Activated naive CD8-positive, alpha-beta T cell treated with anti-CD3 and anti-CD28 coated beads, Interleukin-2, amount 10 ng/mL, durations not matched to agents 7 days and 5 days (primary cell): ENCODE measurements at regions of chr16 and their contacts with region 1.

Region 1: GRCh38 chr16:31179747-31180459 is at the start of gene FUS:
- DNase-seq: peak; percentile 96
- ATAC-seq: peak; percentile 60
- H3K4me3 Mint-ChIP-seq: peak within 1 kb of the TSS; percentile 99
- H3K27ac Mint-ChIP-seq: peak within 1 kb of the TSS; percentile 97
- H3K4me1 Mint-ChIP-seq: peaks cover 44% of the 10 kb centered on the region
- H3K27me3 Mint-ChIP-seq: no peaks in the 10 kb centered on the region
- total RNA-seq, gene FUS: 540 to 618 TPM

Region 2: GRCh38 chr16:30977502-30977901 is 202.4 kb before region 1 on chr16:
- POLR2A ChIA-PET with region 1: no interaction called
- DNase-seq: peak; percentile 48
- ATAC-seq: no peak
- H3K4me3 Mint-ChIP-seq: no peak overlapping the region
- H3K27ac Mint-ChIP-seq: no peak overlapping the region
- H3K4me1 Mint-ChIP-seq: peaks cover 3% of the 10 kb centered on the region
- H3K27me3 Mint-ChIP-seq: no peaks in the 10 kb centered on the region

Region 3: GRCh38 chr16:30997000-30997886 is 182.7 kb before region 1 on chr16:
- POLR2A ChIA-PET with region 1: interaction called, 12 read pairs
- DNase-seq: peak; percentile 86
- ATAC-seq: peak; percentile 97
- H3K4me3 Mint-ChIP-seq: peak overlapping the region; percentile 98
- H3K27ac Mint-ChIP-seq: peak overlapping the region; percentile 95
- H3K4me1 Mint-ChIP-seq: peaks cover 12% of the 10 kb centered on the region
- H3K27me3 Mint-ChIP-seq: peaks cover 5% of the 10 kb centered on the region

Region 4: DNA sequence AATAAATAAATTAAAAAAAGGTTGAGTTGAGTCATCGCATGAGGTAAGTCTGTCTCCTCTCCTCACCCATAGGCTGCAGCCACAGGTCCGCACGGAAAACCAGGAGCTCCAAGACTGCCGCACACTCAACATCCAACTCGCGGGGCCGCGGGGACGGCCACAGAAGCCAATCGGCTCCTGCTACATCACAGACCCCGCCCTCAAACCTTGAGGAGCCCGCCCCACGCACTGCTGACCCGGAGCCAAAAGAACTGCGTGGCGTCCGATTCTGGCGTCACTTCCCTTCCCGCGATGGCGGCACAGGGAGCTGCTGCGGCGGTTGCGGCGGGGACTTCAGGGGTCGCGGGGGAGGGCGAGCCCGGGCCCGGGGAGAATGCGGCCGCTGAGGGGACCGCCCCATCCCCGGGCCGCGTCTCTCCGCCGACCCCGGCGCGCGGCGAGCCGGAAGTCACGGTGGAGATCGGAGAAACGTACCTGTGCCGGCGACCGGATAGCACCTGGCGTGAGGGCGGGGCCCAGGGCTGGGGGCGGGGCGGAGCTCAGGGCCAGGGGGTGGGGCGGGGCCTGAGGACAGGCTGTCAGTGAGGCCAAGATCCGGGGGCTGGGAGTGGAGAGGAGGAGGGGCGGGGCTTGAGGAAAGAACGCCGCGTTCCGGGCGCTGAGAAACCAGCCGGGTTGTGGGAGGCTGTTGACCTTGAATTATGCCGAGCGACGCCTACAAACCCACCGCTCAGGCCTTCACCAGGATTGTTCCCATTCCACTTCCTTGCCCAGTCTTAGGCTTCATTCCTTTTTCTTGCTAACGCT is 62.3 kb before region 1 on chr16 and contains the start of gene KAT8:
- POLR2A ChIA-PET with region 1: interaction called, 28 read pairs
- DNase-seq: peak; percentile 95
- ATAC-seq: peak; percentile 94
- H3K4me3 Mint-ChIP-seq: peak within 1 kb of the TSS; percentile 87
- H3K27ac Mint-ChIP-seq: peak within 1 kb of the TSS; percentile 87
- H3K4me1 Mint-ChIP-seq: peaks cover 12% of the 10 kb centered on the region
- H3K27me3 Mint-ChIP-seq: no peaks in the 10 kb centered on the region
- total RNA-seq, gene KAT8: 66.5 to 72.9 TPM

Region 5: GRCh38 chr16:31157136-31157535 is 22.8 kb before region 1 on chr16:
- POLR2A ChIA-PET with region 1: interaction called, 12 read pairs
- DNase-seq: no peak
- ATAC-seq: peak; percentile 30
- H3K4me3 Mint-ChIP-seq: peak overlapping the region; percentile 37
- H3K27ac Mint-ChIP-seq: no peak overlapping the region
- H3K4me1 Mint-ChIP-seq: peaks cover 5% of the 10 kb centered on the region
- H3K27me3 Mint-ChIP-seq: peaks cover 13% of the 10 kb centered on the region

Region 6: GRCh38 chr16:31196324-31197088 is 16.6 kb after region 1 on chr16:
- POLR2A ChIA-PET with region 1: interaction called, 57 read pairs
- DNase-seq: no peak
- ATAC-seq: no peak
- H3K4me3 Mint-ChIP-seq: no peak overlapping the region
- H3K27ac Mint-ChIP-seq: peak overlapping the region; percentile 45
- H3K4me1 Mint-ChIP-seq: peaks cover 59% of the 10 kb centered on the region
- H3K27me3 Mint-ChIP-seq: no peaks in the 10 kb centered on the region

Region 7: DNA sequence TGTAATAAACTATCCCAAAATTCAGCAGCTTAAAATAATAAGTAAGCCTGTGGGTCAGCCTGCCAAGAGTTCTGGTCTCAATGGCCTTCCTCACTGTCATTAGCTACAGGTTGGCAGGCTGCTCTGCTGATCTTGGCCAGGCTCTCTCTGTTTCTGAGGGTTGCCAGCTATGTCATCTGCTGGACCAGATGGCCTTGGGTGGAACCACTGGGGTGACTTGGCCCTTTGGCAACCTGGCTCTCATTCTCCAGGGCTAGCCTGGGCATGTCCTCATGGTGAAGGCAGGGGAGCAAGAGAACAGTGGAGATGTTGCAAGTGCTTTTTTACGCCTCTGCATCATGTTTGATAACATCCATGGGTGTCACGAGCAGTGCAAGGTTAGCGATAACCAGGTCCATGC is 93.8 kb after region 1 on chr16:
- POLR2A ChIA-PET with region 1: no interaction called
- DNase-seq: no peak
- ATAC-seq: no peak
- H3K4me3 Mint-ChIP-seq: no peak overlapping the region
- H3K27ac Mint-ChIP-seq: no peak overlapping the region
- H3K4me1 Mint-ChIP-seq: peaks cover 3% of the 10 kb centered on the region
- H3K27me3 Mint-ChIP-seq: peaks cover 4% of the 10 kb centered on the region

Region 8: GRCh38 chr16:31441956-31442355 is 262.1 kb after region 1 on chr16:
- POLR2A ChIA-PET with region 1: interaction called, 11 read pairs
- DNase-seq: no peak
- ATAC-seq: no peak
- H3K4me3 Mint-ChIP-seq: peak overlapping the region; percentile 69
- H3K27ac Mint-ChIP-seq: peak overlapping the region; percentile 69
- H3K4me1 Mint-ChIP-seq: peaks cover 18% of the 10 kb centered on the region
- H3K27me3 Mint-ChIP-seq: no peaks in the 10 kb centered on the region